ENCODE measurements at regions of chr20 and their contacts with region 1.

Region 1: DNA sequence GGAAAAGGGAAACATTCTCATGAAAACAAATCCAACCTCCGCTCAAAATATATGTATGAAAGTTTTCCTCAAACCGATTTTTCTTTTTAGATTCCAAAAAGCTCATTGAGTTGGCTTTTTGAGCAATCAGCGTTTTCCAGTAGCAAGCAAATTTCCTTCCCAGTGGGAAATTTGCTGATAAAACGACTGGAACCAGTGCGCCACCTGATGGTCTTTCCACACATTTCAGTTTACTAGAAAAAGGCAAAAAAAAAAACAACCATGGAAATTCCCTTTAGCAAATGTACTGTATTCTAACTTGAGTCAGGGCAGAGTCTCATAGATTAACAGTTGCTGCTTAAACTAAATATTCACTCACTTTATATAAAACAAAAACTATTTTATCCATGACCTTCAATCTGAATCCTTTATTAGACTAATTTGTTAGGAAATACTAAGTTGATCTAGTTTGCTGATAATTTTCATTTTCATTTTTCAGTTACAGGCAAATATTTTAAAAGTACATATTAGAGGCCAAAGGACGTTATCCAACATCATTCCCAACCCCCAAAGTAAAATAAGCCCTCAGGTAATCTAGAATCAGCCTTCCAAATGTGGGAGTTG is 271.5 kb downstream of the FOXA2 start:
- DNase-seq: peak; percentile 62
- H3K4me3 Mint-ChIP-seq: no peak overlapping the region
- H3K27ac Mint-ChIP-seq: no peak overlapping the region
- H3K4me1 Mint-ChIP-seq: peaks cover 2% of the 10 kb centered on the region
- H3K27me3 Mint-ChIP-seq: no peaks in the 10 kb centered on the region
- CTCF ChIP-seq: peak; percentile 73

Region 2: GRCh38 chr20:21640561-21641182 is 672.2 kb before region 1 on chr20:
- CTCF ChIA-PET with region 1: interaction called, 28 read pairs
- POLR2A ChIA-PET with region 1: no interaction called
- intact Hi-C with region 1: loop called (anchors 1 kb)
- DNase-seq: peak; percentile 45
- H3K4me3 Mint-ChIP-seq: no peak overlapping the region
- H3K27ac Mint-ChIP-seq: no peak overlapping the region
- H3K4me1 Mint-ChIP-seq: no peaks in the 10 kb centered on the region
- H3K27me3 Mint-ChIP-seq: peaks cover 17% of the 10 kb centered on the region
- CTCF ChIP-seq: peak; percentile 37

Region 3: DNA sequence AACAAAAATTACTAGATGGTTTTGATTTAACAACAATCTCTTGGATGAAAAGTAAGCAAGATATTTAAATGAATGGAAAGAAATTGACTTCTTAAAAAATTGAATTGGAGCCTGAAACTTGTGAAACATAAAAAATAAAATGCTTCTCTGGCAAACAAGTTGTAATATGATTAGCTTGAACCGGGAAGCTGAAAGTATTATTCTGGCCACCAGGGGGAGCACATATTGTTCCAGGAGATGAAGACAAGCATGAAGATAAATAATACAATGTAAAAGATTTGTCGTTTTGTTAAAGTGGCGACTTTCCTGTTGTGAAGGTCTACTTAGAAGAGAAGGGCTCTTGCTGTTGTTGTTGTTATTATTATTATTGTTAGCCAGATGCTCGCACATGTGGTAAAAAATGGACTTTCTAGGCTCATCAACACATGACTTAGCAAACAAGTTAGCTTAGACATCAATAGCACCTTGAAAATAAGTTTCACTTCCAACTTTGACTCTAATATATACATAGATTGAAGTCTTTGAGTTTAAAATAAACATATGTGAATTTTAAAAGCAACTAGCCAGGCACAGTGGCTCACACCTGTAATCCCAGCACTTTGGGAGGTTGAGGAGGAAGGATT is 593.1 kb before region 1 on chr20:
- CTCF ChIA-PET with region 1: interaction called, 143 read pairs
- POLR2A ChIA-PET with region 1: interaction called, 3 read pairs
- intact Hi-C with region 1: loop called (anchors 1 kb)
- DNase-seq: peak; percentile 69
- H3K4me3 Mint-ChIP-seq: no peak overlapping the region
- H3K27ac Mint-ChIP-seq: no peak overlapping the region
- H3K4me1 Mint-ChIP-seq: no peaks in the 10 kb centered on the region
- H3K27me3 Mint-ChIP-seq: peaks cover 40% of the 10 kb centered on the region
- CTCF ChIP-seq: peak; percentile 57

Region 4: GRCh38 chr20:22106308-22106938 is 206.4 kb before region 1 on chr20:
- CTCF ChIA-PET with region 1: interaction called, 4 read pairs
- POLR2A ChIA-PET with region 1: no interaction called
- intact Hi-C with region 1: loop called (anchors 1 kb)
- DNase-seq: peak; percentile 3
- H3K4me3 Mint-ChIP-seq: no peak overlapping the region
- H3K27ac Mint-ChIP-seq: no peak overlapping the region
- H3K4me1 Mint-ChIP-seq: no peaks in the 10 kb centered on the region
- H3K27me3 Mint-ChIP-seq: peaks cover 63% of the 10 kb centered on the region
- CTCF ChIP-seq: peak; percentile 72

Region 5: GRCh38 chr20:22288957-22289356 is 23.9 kb before region 1 on chr20:
- CTCF ChIA-PET with region 1: interaction called, 22 read pairs
- POLR2A ChIA-PET with region 1: interaction called, 7 read pairs
- intact Hi-C with region 1: no loop called
- DNase-seq: peak; percentile 54
- H3K4me3 Mint-ChIP-seq: peak overlapping the region; percentile 28
- H3K27ac Mint-ChIP-seq: peak overlapping the region; percentile 92
- H3K4me1 Mint-ChIP-seq: peaks cover 40% of the 10 kb centered on the region
- H3K27me3 Mint-ChIP-seq: no peaks in the 10 kb centered on the region
- CTCF ChIP-seq: no peak

Region 6: DNA sequence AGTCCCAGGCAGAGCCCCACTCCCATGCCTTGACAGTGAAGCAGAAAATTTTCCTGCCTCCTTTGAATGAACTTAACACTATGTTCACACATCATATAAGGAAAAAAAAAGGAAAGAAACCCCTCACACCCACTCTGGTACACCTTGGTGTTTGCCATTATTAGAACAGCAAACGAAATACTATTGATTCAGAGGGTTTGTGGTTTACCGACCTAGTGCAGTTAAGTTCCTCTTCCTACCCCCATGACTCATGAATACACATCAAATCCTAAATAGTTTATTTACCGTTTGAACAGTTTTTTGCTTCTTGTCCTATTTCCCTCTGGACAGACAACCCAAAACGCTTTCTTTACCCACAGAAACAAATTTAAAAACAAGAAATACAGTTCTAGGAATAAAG is 33.9 kb after region 1 on chr20:
- CTCF ChIA-PET with region 1: no interaction called
- POLR2A ChIA-PET with region 1: no interaction called
- intact Hi-C with region 1: no loop called
- DNase-seq: no peak
- H3K4me3 Mint-ChIP-seq: no peak overlapping the region
- H3K27ac Mint-ChIP-seq: peak overlapping the region; percentile 16
- H3K4me1 Mint-ChIP-seq: peaks cover 17% of the 10 kb centered on the region
- H3K27me3 Mint-ChIP-seq: no peaks in the 10 kb centered on the region
- CTCF ChIP-seq: no peak